ENCODE measurements at regions of chr21 and their contacts with region 1.

Region 1: DNA sequence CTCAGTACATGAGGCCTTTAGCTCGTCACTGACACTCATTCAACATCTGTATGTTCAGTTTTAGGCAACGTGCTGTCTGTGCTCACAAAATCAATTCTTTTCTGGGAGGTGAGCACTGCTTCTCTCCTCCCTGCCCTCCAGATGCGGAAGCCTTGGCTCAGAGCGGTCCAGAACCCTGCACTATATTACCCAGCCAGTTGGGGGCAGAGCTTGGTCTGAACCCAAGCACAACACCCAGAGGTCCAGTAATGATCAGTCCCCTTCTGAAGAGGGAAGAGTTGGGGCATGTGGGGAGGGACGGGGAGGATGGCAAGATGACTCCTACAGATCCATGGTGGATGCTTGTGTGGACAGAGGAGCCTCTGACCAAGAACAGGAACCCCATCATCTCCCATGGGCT is 5.6 kb upstream of the DSCAM start:
- ATAC-seq: no peak
- H3K4me3 ChIP-seq: no peak overlapping the region
- H3K27ac ChIP-seq: no peak overlapping the region
- H3K4me1 ChIP-seq: peaks cover 12 to 17% of the 10 kb centered on the region in 2 donors

Region 2: GRCh38 chr21:41045534-41046268 is 193.1 kb after region 1 on chr21:
- in situ Hi-C with region 1: loop called in 2 of 9 experiments (anchors 25 kb)
- ATAC-seq: peak in 7 of 8 experiments; percentile 29 to 99 (median 97)
- H3K4me3 ChIP-seq: no peak overlapping the region
- H3K27ac ChIP-seq: peak overlapping the region in 1 of 2 donors; percentile 3
- H3K4me1 ChIP-seq: peaks cover 11 to 28% of the 10 kb centered on the region in 2 donors

Region 3: GRCh38 chr21:41068967-41069642 is 216.5 kb after region 1 on chr21:
- in situ Hi-C with region 1: loop called in 1 of 9 experiments (anchors 25 kb)
- ATAC-seq: peak; percentile 79 to 98 (median 97)
- H3K4me3 ChIP-seq: peak overlapping the region; percentile 0 to 12 (median 7)
- H3K27ac ChIP-seq: peak overlapping the region; percentile 5 to 32
- H3K4me1 ChIP-seq: peaks cover 20 to 22% of the 10 kb centered on the region in 2 donors

Measured in motor neuron (in vitro differentiated cells).